ENCODE measurements at regions of chr3 and their contacts with region 1.

Region 1: GRCh38 chr3:58237238-58237940 is at the start of gene ABHD6:
- DNase-seq: peak; percentile 89
- H3K4me3 ChIP-seq: peak within 1 kb of the TSS; percentile 64 to 96 (median 86)
- H3K27ac ChIP-seq: peak within 1 kb of the TSS; percentile 81 to 91 (median 88)
- H3K4me1 ChIP-seq: peaks cover 0 to 35% (median 21%) of the 10 kb centered on the region in 4 donors
- H3K27me3 ChIP-seq: no peaks in the 10 kb centered on the region
- CTCF ChIP-seq: no peak
- EP300 ChIP-seq: no peak
- POLR2A ChIP-seq: peak in 1 of 2 donors; percentile 17
- total RNA-seq, gene ABHD6: 14.7 to 47.4 (median 31.2) TPM

Region 2: DNA sequence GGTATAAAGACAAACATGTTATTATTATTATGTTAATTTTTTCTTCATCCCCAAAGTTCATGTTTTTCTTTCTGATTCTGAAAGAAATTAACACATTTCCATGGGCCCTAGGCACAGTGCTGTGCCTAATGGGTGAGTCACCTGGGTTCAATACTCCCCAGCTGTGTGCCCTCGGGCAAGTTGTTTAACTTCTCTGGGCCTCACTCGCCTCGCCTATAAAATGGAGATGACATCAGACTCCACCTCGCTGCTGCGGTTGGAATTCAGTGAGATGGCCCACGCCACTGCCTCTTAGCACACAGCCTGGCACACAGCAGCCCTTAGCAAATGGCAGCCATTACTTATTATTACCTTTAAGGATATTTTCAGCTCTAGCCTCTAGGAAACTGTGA is 49.2 kb before region 1 on chr3:
- intact Hi-C with region 1: loop called (anchors 5 kb)
- DNase-seq: no peak
- H3K4me3 ChIP-seq: no peak overlapping the region
- H3K27ac ChIP-seq: peak overlapping the region in 1 of 4 donors; percentile 37
- H3K4me1 ChIP-seq: no peaks in the 10 kb centered on the region
- H3K27me3 ChIP-seq: no peaks in the 10 kb centered on the region
- CTCF ChIP-seq: no peak
- EP300 ChIP-seq: no peak
- POLR2A ChIP-seq: no peak

Region 3: DNA sequence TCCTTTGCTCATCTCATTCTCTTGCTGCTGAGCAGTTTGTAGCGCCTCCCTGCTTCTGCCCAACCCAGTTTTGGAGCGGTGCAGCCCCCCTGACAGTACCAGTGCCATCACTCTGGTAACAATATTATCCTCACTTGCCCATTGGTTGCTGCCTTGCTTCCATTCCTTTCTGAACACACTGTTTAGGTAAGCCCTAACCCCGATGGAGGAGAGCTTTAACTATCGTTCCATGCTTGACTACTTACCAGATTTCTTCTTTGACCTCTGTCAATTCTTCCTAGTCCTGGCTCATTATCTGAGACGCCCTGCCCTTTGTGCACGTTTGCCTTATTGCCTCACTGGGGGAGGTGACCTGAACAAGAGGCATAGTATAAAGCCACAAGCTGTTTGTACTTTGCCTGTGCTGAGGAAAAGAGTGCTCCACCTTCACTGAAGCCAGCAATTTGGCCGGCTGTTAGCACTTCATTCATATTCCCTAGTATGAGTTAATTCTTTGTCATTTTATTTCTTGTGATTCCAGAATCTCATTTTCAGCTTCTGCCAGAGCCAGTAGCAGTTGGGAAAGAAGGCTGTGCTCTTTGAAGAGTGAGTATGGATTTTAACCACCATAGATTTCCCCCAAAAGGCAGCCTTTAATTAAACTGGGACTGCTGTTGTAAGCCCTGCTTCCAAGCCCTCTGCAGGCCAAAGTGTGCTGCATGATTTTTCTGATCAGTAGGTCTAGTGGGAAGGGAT is 12.1 kb after region 1 on chr3:
- intact Hi-C with region 1: loop called (anchors 1 kb)
- DNase-seq: no peak
- H3K4me3 ChIP-seq: no peak overlapping the region
- H3K27ac ChIP-seq: peak overlapping the region in 1 of 4 donors; percentile 36
- H3K4me1 ChIP-seq: peaks cover 0 to 77% (median 63%) of the 10 kb centered on the region in 4 donors
- H3K27me3 ChIP-seq: no peaks in the 10 kb centered on the region
- CTCF ChIP-seq: no peak
- EP300 ChIP-seq: no peak
- POLR2A ChIP-seq: no peak

Region 4: DNA sequence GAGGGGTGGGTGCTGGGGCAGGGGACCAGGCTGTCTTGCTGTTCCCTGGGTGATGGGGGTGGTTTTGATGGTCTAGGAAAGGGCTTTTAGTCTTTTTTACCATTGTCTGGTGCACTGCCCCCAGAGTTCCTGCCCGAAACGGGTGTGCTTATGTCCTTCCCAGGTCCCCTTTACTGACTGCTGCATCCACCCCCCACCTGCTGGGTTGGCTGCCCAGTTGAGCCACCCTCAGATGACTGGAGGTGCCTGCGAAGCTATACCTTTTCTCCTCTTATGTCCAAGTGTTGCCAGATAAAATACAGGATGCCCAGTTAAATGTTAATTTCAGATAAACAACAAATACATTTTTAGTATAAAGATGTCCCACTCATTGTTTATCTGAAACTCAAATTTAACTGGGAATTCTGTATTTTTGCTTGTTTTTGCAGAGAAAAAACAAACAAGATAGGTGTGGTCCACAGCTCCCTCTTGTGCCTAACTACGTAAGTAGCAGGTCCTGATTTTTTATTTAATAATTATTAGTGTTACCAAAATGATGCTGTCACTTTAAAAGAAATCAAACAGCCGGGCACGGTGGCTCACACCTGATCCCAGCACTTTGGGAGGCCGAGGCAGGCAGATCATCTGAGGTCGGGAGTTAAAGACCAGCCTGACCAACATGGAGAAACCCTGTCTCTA is 62.6 kb after region 1 on chr3:
- intact Hi-C with region 1: loop called (anchors 1 kb)
- DNase-seq: no peak
- H3K4me3 ChIP-seq: no peak overlapping the region
- H3K27ac ChIP-seq: no peak overlapping the region
- H3K4me1 ChIP-seq: peaks cover 0 to 3% (median 1%) of the 10 kb centered on the region in 4 donors
- H3K27me3 ChIP-seq: no peaks in the 10 kb centered on the region
- CTCF ChIP-seq: peak; percentile 26 to 57 (median 44)
- EP300 ChIP-seq: no peak
- POLR2A ChIP-seq: no peak

Region 5: DNA sequence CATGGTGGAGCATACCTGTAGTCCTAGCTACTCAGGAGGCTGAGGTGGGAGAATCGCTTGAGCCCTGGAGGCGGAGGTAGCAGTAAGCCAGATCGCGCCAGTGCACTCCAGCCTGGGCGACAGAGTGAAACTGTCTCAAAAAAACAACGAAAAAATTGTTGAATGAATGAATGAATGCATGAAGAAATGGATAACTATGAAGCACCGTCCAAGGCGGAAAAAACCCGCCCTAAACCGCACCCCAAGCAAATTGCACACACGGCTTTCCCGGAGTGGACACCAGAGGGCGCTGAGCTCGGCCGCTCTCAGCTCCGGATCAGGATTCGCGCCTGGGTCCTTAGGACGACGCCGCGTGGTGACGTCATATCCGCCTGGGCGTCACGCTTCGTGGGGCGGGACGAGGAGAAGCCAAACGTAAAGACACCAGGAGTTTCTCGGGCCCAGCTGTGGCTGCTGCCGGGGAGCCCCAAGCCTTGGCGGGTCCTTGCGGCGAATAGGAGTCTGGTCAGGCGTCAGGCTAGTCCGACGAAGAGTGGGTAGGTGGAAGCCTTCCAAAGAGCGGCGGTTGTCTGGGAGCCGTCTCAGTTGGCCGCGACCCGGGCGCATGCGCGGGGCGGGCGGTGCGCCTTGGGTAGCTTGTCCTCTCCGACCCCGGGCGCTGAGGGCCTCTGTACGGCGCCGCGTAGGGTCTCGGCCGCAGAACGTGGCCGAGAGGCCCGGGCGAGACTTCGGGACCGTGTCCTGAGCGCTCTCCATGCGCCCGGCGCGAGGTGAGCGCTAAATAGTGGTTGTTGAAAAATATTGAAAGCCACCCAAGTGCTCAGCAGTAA is 68.7 kb after region 1 on chr3 and contains the starts of genes HTD2 and RPP14:
- intact Hi-C with region 1: loop called (anchors 2 kb)
- DNase-seq: peak; percentile 99
- H3K4me3 ChIP-seq: peak within 1 kb of the TSS; percentile 65 to 96 (median 77)
- H3K27ac ChIP-seq: peak within 1 kb of the TSS; percentile 89 to 98 (median 96)
- H3K4me1 ChIP-seq: peaks cover 0 to 32% (median 30%) of the 10 kb centered on the region in 4 donors
- H3K27me3 ChIP-seq: no peaks in the 10 kb centered on the region
- CTCF ChIP-seq: peak; percentile 90 to 98 (median 92)
- EP300 ChIP-seq: peak in 1 of 4 donors; percentile 31
- POLR2A ChIP-seq: peak; percentile 60 to 62
- total RNA-seq, gene HTD2: 6.9 to 20.8 (median 12.5) TPM
- total RNA-seq, gene RPP14: 10.8 to 16.7 (median 13.8) TPM

Region 6: DNA sequence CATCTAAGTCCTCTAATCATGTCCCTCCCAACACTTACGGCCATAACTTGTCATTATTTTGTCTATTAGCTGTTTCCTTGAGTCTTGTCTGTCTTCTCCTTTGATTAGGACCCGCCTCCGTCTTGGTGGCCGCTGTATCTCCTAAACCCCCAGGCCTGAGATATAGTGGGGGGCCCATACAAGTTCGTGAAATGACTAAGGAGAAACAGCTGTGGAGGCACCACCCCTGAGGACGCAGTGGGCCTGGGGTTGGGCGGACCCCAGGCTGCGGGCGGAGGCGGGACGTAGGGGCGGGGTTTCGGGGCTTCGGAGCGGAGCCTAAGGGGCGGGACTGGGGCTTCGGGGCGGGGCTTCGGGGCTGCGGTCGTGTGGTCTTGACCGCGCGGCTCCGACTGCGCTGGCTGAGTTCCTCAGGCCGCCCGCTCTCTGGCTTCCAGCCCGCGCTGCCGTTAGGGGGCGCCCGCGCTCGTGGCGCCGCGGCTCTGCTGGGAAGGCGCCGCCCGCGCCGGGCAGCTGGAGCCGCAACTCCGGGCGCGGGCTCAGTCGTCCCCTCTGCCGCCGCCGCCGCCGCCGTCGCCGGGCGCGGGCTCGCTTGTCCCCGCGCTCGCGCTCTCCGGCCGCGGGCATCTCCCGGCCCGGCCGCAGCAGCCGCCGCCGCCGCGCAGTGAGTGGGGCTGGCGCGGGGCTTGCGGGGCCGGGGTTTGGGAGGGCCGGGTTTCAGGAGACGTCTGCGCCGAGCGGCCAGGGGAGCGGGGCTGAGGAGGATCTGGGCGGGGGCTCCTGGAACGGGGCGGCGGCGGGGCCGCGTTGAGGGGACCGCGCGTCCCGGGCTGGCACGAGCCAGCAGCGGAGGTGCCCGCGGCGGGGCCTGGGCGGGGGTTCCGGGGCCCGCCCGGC is 254.4 kb after region 1 on chr3 and contains the start of gene KCTD6:
- intact Hi-C with region 1: loop called (anchors 5 kb)
- DNase-seq: peak; percentile 95
- H3K4me3 ChIP-seq: peak within 1 kb of the TSS; percentile 77 to 96 (median 87)
- H3K27ac ChIP-seq: peak within 1 kb of the TSS; percentile 83 to 95 (median 87)
- H3K4me1 ChIP-seq: peaks cover 0 to 57% (median 38%) of the 10 kb centered on the region in 4 donors
- H3K27me3 ChIP-seq: no peaks in the 10 kb centered on the region
- CTCF ChIP-seq: peak in 2 of 4 experiments; percentile 28 to 63
- EP300 ChIP-seq: no peak
- POLR2A ChIP-seq: no peak
- total RNA-seq, gene KCTD6: 11.0 to 25.3 (median 17.7) TPM